CD8-positive, alpha-beta T cell (primary cell): ENCODE measurements at regions of chr18 and their contacts with region 1.

Region 1: GRCh38 chr18:26804519-26804918 is 61.0 kb downstream of the AQP4 start:
- DNase-seq: no peak
- ATAC-seq: no peak
- H3K4me3 ChIP-seq: no peak overlapping the region
- H3K4me3 Mint-ChIP-seq: no peak overlapping the region
- H3K27ac ChIP-seq: no peak overlapping the region
- H3K27ac Mint-ChIP-seq: no peak overlapping the region
- H3K4me1 ChIP-seq: no peaks in the 10 kb centered on the region
- H3K4me1 Mint-ChIP-seq: no peaks in the 10 kb centered on the region
- H3K27me3 ChIP-seq: no peaks in the 10 kb centered on the region
- H3K27me3 Mint-ChIP-seq: no peaks in the 10 kb centered on the region
- CTCF ChIP-seq: no peak

Region 2: GRCh38 chr18:25587545-25587944 is 1217.0 kb before region 1 on chr18:
- CTCF ChIA-PET with region 1: no interaction called
- POLR2A ChIA-PET with region 1: no interaction called
- intact Hi-C with region 1: loop called in 1 of 2 experiments (anchors 10 kb)
- DNase-seq: no peak
- ATAC-seq: no peak
- H3K4me3 ChIP-seq: no peak overlapping the region
- H3K4me3 Mint-ChIP-seq: no peak overlapping the region
- H3K27ac ChIP-seq: no peak overlapping the region
- H3K27ac Mint-ChIP-seq: no peak overlapping the region
- H3K4me1 ChIP-seq: no peaks in the 10 kb centered on the region
- H3K4me1 Mint-ChIP-seq: no peaks in the 10 kb centered on the region
- H3K27me3 ChIP-seq: no peaks in the 10 kb centered on the region
- H3K27me3 Mint-ChIP-seq: no peaks in the 10 kb centered on the region
- CTCF ChIP-seq: no peak

Region 3: DNA sequence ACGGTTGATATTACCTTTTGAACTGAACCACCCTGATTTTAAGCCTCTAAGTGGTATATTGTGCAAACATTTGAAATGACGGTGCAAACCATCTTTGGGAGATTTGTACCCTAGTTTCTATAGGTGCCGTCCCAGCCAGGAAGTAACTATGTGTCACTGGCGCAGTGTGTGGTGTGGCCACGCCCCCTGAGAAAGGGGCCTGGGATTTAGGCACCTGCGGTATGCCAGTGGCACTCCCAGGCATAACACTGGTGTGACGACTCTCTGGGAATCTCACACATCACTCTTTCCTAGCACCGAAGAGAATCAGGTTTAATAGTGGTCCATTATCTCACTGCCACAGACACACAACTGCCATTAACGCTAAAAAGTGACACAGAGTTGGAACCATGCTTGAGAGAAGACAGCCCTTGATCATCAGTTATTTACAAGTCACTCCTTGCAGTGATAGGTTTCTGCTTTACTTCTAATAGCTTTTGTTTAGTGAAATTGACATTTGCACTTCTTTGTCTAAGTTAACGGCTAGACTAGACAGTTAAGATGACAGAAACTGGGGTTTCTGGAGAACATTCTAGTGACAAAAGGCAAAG is 49.9 kb after region 1 on chr18:
- CTCF ChIA-PET with region 1: no interaction called
- POLR2A ChIA-PET with region 1: no interaction called
- intact Hi-C with region 1: no loop called
- DNase-seq: no peak
- ATAC-seq: no peak
- H3K4me3 ChIP-seq: no peak overlapping the region
- H3K4me3 Mint-ChIP-seq: no peak overlapping the region
- H3K27ac ChIP-seq: no peak overlapping the region
- H3K27ac Mint-ChIP-seq: no peak overlapping the region
- H3K4me1 ChIP-seq: no peaks in the 10 kb centered on the region
- H3K4me1 Mint-ChIP-seq: no peaks in the 10 kb centered on the region
- H3K27me3 ChIP-seq: no peaks in the 10 kb centered on the region
- H3K27me3 Mint-ChIP-seq: no peaks in the 10 kb centered on the region
- CTCF ChIP-seq: no peak